ENCODE measurements at regions of chr7 and their contacts with region 1.

Region 1: DNA sequence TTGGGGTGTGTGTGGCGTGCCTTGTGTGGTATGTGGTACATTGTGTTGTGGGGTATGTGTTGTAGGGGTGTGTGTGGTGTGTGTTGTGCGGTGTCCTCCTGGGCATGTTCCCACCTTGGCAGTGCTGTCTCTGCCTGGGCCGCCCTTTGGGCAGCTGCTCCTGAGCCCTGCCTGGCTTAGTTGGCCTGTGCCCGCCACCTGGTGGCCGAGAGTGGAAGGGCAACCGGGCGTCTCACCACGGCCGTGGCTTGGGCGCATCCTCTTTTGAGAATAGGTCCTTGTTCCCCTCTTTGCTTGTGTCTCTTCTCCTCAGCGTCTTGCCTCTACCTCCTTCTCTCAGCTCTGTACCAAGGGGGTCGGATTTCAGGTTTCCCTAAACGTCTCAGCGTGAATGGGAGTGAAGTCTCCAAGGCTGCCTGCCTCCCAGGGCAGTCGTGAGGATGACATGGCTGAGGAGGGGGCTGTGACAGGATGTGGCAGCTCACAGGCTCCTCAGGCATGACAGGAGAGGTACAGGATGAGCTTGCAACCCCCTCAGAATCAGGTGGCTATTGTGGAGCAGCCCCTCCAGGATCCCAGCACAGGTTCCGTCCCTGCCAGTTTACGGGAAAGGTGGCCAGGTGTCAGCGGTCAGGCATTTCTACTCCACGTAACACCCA is 98.4 kb upstream of the PODXL start:
- DNase-seq: peak; percentile 81
- ATAC-seq: peak; percentile 89
- H3K4me3 Mint-ChIP-seq: no peak overlapping the region
- H3K27ac Mint-ChIP-seq: no peak overlapping the region
- H3K4me1 Mint-ChIP-seq: no peaks in the 10 kb centered on the region
- H3K27me3 Mint-ChIP-seq: no peaks in the 10 kb centered on the region
- CTCF ChIP-seq: peak; percentile 74

Region 2: DNA sequence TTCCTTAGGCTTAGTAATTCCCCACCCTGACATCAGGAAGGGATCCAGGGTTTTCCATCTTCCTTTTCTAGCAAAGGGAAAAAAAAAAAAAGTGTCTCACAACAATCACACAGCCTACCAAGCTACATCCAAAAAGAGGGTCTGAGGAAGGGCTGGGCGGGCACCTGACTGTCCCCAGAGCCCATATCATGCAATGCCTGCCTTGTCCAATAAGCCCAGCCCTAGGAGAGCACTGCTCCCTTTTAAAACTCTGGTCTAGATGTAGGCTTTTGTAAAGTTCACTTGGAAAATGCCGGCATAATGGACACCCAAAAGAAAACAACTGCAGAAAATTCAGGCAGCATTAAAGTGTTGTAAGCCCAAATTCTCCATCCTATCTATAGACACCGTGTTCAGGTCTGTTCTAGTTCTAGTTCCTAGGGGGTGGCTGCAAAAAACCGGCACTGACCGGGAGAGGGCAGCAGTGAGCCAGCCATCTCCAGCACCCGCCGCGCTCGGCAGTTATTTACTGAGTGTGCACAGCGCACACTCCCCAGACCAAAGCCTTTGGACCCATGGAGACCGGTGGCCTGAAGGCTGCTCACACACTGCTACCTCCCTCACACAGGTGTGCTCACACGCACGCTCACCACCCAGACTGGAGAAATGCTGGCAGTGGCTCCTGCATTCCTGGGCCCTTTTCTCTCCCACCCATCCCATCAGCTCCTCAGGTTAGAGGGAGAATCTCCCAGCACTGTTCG is 147.0 kb before region 1 on chr7:
- CTCF ChIA-PET with region 1: interaction called, 25 read pairs
- POLR2A ChIA-PET with region 1: no interaction called
- intact Hi-C with region 1: loop called (anchors 1 kb)
- DNase-seq: peak; percentile 67
- ATAC-seq: peak; percentile 91
- H3K4me3 Mint-ChIP-seq: no peak overlapping the region
- H3K27ac Mint-ChIP-seq: no peak overlapping the region
- H3K4me1 Mint-ChIP-seq: peaks cover 18% of the 10 kb centered on the region
- H3K27me3 Mint-ChIP-seq: peaks cover 3% of the 10 kb centered on the region
- CTCF ChIP-seq: peak; percentile 50

Region 3: GRCh38 chr7:131544449-131545301 is 110.1 kb before region 1 on chr7:
- CTCF ChIA-PET with region 1: no interaction called
- POLR2A ChIA-PET with region 1: no interaction called
- intact Hi-C with region 1: loop called (anchors 1 kb)
- DNase-seq: no peak
- ATAC-seq: no peak
- H3K4me3 Mint-ChIP-seq: no peak overlapping the region
- H3K27ac Mint-ChIP-seq: no peak overlapping the region
- H3K4me1 Mint-ChIP-seq: no peaks in the 10 kb centered on the region
- H3K27me3 Mint-ChIP-seq: no peaks in the 10 kb centered on the region
- CTCF ChIP-seq: no peak

Region 4: DNA sequence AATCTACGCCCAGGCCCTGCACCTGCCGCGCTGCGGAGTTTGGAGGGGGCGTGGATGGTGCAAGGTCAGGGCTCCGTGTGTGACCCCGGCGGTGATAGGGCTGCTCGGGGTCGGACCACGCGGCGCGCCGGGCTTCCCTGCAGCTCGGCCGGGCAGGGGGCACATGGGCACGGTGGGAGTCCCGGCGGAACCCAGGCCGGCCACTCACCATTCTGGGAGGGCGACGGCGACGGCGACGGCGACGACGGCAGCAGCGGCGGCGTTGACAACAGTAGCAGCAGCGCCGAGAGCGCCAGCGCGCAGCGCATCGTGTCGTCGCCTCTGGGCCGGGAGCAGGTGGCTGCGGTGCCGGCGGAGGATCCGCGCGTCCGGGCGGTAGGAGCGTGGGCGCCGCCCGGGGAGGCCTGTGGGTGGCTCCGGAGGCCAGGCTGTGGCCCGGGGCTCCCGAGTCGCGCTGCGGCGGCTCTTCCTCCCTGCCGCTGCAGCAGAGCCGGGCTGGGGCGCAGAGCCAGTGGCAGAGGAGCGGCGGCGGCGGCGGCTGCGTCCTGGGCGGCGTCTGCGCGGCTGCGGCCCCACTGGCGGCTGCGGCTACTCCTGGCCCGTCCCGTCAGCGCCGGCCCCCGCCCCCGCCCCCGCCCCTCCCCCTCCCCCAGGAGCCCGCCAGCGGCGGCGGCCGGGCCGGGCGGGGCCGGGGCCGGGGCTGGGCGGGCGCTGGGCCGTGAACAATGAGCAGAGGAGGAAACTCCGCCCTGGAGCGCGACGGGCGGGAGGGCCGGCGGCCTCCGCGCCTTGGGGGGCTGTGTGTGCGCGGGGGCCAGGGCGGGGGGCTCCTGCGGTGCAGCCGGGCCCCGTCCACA is 98.5 kb before region 1 on chr7 and contains the start of gene PODXL:
- CTCF ChIA-PET with region 1: interaction called, 3 read pairs
- POLR2A ChIA-PET with region 1: no interaction called
- intact Hi-C with region 1: loop called (anchors 5 kb)
- DNase-seq: peak; percentile 67
- ATAC-seq: peak; percentile 87
- H3K4me3 Mint-ChIP-seq: peak within 1 kb of the TSS; percentile 81
- H3K27ac Mint-ChIP-seq: no peak within 1 kb of the TSS
- H3K4me1 Mint-ChIP-seq: peaks cover 24% of the 10 kb centered on the region
- H3K27me3 Mint-ChIP-seq: peaks cover 11% of the 10 kb centered on the region
- CTCF ChIP-seq: no peak
- total RNA-seq, gene PODXL: 0.93 and 1.4 TPM in 2 replicates

Region 5: DNA sequence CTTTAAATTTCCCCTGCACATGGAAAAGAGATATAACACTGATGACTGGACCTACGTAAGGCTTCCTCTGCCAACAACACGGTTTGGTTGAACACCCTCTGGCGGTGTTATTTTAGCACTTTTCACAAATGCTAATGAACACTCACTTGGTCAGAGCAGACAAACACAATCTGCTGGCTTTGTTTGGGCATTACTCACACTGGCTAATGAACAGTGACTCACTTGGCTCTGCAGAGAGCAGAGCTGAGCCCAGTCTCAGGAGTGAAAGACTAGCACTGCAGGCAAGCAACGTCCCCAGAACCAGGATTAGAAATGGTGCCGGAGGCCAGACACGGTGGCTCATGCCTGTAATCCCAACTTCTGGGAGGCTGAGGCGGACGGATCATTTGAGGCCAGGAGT is 490.7 kb after region 1 on chr7:
- CTCF ChIA-PET with region 1: no interaction called
- POLR2A ChIA-PET with region 1: no interaction called
- intact Hi-C with region 1: no loop called
- DNase-seq: no peak
- ATAC-seq: no peak
- H3K4me3 Mint-ChIP-seq: no peak overlapping the region
- H3K27ac Mint-ChIP-seq: no peak overlapping the region
- H3K4me1 Mint-ChIP-seq: no peaks in the 10 kb centered on the region
- H3K27me3 Mint-ChIP-seq: peaks cover 3% of the 10 kb centered on the region
- CTCF ChIP-seq: no peak